ENCODE measurements at regions of chr10 and their contacts with region 1.

Region 1: GRCh38 chr10:119834188-119834587 is 38.5 kb downstream of the MCMBP start:
- DNase-seq: no peak
- H3K4me3 Mint-ChIP-seq: no peak overlapping the region
- H3K27ac Mint-ChIP-seq: peak overlapping the region; percentile 46
- H3K4me1 Mint-ChIP-seq: peaks cover 41% of the 10 kb centered on the region
- H3K27me3 Mint-ChIP-seq: no peaks in the 10 kb centered on the region

Region 2: GRCh38 chr10:119061352-119061751 is 772.8 kb before region 1 on chr10:
- intact Hi-C with region 1: loop called (anchors 10 kb)
- DNase-seq: no peak
- H3K4me3 Mint-ChIP-seq: no peak overlapping the region
- H3K27ac Mint-ChIP-seq: no peak overlapping the region
- H3K4me1 Mint-ChIP-seq: peaks cover 14% of the 10 kb centered on the region
- H3K27me3 Mint-ChIP-seq: no peaks in the 10 kb centered on the region

Region 3: GRCh38 chr10:119705434-119705831 is 128.8 kb before region 1 on chr10:
- intact Hi-C with region 1: loop called (anchors 1 kb)
- DNase-seq: no peak
- H3K4me3 Mint-ChIP-seq: peak overlapping the region; percentile 74
- H3K27ac Mint-ChIP-seq: peak overlapping the region; percentile 99
- H3K4me1 Mint-ChIP-seq: peaks cover 82% of the 10 kb centered on the region
- H3K27me3 Mint-ChIP-seq: peaks cover 2% of the 10 kb centered on the region

Region 4: DNA sequence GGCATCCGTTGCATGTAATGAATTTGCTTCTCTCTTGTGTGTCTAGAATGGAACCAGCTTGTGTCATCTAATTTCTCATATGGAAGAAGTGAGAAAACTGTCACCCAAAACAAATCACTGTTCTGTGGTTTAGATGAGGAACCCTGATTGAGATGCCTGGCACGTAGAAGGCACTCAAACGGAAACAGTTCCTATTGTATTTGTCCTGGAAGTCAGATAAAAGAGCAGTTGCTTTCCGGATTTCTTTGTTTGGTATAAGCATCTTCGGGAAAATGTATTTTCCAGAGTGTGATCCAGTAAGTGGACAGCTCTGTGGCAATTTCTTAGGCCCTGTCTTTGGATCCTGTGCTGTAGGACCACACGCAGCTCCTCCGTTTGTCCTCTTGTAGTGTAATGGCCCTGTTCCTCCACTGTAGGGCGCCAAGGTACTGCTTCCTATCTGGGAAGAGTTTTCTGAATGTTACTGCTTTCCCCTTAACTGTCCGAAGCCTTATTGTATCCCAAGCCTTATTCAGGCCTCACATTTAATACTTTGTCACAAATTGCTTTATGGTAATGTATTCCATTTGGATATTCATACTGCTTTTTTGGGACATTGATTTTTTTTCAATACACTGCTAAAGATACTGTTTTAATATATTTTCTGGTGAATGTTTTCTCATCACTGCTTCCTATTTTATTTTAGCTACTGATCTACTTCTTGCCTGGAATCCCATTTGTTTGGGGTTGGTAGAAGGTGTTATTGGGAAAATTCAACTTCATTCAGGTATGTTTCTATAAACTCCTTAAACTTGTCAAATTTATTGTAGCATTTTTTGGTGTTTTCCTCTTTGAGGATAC is 83.6 kb before region 1 on chr10:
- intact Hi-C with region 1: loop called (anchors 1 kb)
- DNase-seq: peak; percentile 39
- H3K4me3 Mint-ChIP-seq: no peak overlapping the region
- H3K27ac Mint-ChIP-seq: no peak overlapping the region
- H3K4me1 Mint-ChIP-seq: peaks cover 7% of the 10 kb centered on the region
- H3K27me3 Mint-ChIP-seq: no peaks in the 10 kb centered on the region

Region 5: DNA sequence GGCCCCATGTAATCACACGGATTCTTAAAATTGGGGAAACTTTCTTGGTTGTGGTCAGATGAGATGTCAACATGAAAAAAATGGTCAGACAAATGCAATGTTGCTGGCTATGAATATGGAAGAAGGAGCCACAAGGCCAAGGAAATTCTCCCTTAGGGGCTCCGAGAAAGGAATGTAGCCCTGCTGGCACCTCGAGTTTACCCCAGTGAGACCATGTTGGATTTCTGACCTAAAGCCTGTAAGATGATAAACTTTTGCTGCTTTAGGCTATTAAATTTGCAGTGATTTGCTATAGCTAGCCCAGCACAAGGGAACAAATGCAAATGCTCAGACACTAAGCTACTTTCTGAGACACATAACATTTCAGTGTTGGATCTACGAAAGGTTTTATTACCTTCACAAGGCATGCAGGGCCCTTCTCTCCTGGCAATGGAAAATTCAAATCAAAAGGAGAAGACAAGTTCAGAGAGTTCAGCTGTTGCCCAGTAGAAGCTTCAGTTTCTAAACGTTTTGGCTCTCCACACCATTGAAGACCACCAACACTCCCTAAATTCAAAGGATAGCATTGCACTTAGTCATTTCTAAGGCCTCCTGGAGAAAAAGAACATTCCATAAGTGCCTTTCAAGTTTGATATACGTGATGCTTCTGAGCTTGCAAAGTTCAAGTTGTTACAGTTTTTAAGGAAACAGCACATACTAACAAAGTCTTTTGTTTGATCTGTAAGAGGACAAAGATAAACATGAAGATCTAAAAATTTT is 15.0 kb after region 1 on chr10:
- intact Hi-C with region 1: no loop called
- DNase-seq: no peak
- H3K4me3 Mint-ChIP-seq: no peak overlapping the region
- H3K27ac Mint-ChIP-seq: no peak overlapping the region
- H3K4me1 Mint-ChIP-seq: peaks cover 6% of the 10 kb centered on the region
- H3K27me3 Mint-ChIP-seq: no peaks in the 10 kb centered on the region

Region 6: DNA sequence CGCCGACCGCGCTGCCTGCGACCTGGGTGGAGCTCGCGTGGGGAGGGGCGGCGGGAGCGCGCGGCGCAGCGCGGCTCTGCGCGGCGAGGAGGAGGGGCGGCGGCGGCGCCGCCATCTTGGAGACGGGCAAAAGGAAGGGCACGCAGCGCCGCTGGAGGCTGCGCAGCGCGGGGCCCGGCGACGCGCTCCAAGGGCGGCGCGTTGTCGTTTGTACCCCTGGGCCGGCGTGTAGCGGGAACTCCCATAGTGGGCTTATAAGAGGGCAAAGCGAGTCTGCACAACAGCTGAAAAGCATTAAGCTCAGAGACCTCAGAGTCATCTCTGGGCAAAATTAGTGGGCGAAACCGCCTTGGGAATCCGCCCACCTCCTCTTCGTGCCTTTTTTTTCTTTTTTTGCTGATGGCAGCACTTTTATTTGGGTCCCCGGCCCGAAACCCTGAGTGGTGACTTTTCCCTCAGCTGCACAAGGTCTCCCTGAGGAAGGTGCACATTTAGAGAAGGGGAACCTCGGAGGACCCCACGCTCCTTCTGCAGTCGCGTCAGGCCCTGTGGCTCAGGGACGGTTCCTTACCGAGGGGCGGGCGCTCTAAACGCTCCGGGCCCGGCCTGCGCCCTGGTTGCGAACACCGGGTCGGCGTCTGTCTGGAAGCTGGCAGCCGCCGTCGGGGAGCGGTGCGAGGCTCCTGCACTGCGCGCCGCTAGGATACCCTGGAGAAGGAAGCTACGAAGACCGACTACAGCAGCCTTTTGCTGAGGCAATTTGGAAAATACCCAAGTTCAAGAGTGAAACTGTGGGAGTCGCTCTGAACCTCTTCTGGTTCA is 38.9 kb after region 1 on chr10:
- intact Hi-C with region 1: loop called (anchors 2 kb)
- DNase-seq: peak; percentile 87
- H3K4me3 Mint-ChIP-seq: peak overlapping the region; percentile 84
- H3K27ac Mint-ChIP-seq: peak overlapping the region; percentile 80
- H3K4me1 Mint-ChIP-seq: peaks cover 34% of the 10 kb centered on the region
- H3K27me3 Mint-ChIP-seq: no peaks in the 10 kb centered on the region

Region 7: DNA sequence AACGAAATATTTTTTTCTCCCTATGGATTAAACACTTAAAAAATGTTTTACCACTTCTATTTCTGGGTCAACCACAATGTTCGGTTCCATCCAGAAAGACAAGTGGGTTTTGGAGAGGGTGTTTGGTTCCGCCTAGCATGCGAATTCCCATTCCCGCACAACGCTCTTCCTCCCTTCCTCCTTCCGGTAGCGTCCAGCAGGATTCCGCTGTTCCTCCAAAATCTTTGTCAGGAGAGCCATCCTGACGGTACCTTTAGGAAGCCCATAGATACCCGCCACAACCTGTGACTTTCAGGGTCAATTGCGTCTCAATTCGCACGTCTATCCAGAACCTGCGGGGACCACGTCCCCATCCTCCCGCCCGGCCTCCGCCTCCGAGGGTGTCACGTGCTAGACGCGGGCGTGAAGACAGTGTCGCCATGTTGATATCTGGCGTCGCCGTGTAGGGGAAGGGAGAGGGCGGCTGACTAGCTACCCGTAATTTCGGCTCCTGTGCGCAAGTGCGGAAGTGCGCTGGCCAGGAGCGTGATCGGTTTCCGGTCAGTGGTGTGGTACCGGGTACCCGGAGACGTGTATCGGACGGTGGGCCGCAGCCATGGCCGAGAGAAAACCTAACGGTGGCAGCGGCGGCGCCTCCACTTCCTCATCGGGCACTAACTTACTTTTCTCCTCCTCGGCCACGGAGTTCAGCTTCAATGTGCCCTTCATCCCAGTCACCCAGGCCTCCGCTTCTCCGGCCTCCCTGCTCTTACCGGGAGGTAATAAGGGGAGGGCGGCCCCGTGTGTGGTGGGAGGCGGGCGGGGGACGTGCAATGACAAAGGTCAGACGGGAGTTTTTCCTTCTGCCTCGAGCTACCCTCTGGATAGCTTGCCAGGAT is 58.2 kb after region 1 on chr10 and contains the start of gene SEC23IP:
- intact Hi-C with region 1: loop called (anchors 1 kb)
- DNase-seq: peak; percentile 92
- H3K4me3 Mint-ChIP-seq: peak within 1 kb of the TSS; percentile 92
- H3K27ac Mint-ChIP-seq: peak within 1 kb of the TSS; percentile 96
- H3K4me1 Mint-ChIP-seq: peaks cover 53% of the 10 kb centered on the region
- H3K27me3 Mint-ChIP-seq: peaks cover 4% of the 10 kb centered on the region
- total RNA-seq, gene SEC23IP: 79.7 and 91.7 TPM in 2 replicates

Region 8: DNA sequence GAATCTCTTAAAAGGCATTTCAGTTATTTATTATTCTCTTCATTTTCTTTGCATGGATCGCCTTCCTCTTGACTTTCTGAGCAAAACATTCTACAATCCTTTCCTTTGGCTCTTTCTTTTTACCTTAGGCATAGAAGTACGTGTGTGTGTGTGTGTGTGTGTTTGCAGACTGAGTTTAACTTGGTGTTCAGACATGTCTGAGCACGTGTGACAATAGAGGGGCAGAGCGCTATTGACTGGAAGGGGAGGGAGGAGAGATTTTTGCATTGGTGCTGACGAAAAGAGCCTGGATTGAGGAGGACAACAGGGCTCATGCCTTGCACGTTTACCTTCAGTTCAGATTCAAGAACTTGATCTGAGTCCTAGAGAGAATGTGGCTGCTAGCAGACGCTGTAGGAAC is 188.2 kb after region 1 on chr10:
- intact Hi-C with region 1: no loop called
- DNase-seq: no peak
- H3K4me3 Mint-ChIP-seq: no peak overlapping the region
- H3K27ac Mint-ChIP-seq: no peak overlapping the region
- H3K4me1 Mint-ChIP-seq: no peaks in the 10 kb centered on the region
- H3K27me3 Mint-ChIP-seq: peaks cover 9% of the 10 kb centered on the region

Measured in activated T-helper 1 cell treated with anti-CD3 and anti-CD28 coated beads, Interleukin-12 subunit alpha, Interleukin-12 subunit beta, Interleukin-2, Interleukin-4 antibody, amounts not matched to agents 30 ng/mL and 10 ng/mL and 1 ng/mL, durations not matched to agents 14 hours and 24 hours and 36 hours (primary cell).